ENCODE measurements at regions of chr20 and their contacts with region 1.

Region 1: GRCh38 chr20:56400090-56400542 is 7.7 kb downstream of the CSTF1 start:
- DNase-seq: peak in 2 of 5 donors; percentile 56 to 58
- ATAC-seq: peak in 2 of 4 donors; percentile 44 to 69
- H3K4me3 ChIP-seq: no peak overlapping the region
- H3K27ac ChIP-seq: no peak overlapping the region
- H3K4me1 ChIP-seq: peaks cover 0 to 12% (median 5%) of the 10 kb centered on the region in 12 donors
- H3K27me3 ChIP-seq: no peaks in the 10 kb centered on the region
- CTCF ChIP-seq: peak; percentile 71 to 91 (median 85)
- POLR2A ChIP-seq: no peak

Region 2: GRCh38 chr20:56460459-56460858 is 60.3 kb after region 1 on chr20:
- intact Hi-C with region 1: loop called in 4 of 10 experiments (anchors 5 kb)
- DNase-seq: no peak
- ATAC-seq: no peak
- H3K4me3 ChIP-seq: no peak overlapping the region
- H3K27ac ChIP-seq: peak overlapping the region in 1 of 12 donors; percentile 15
- H3K4me1 ChIP-seq: peaks cover 0 to 25% (median 0%) of the 10 kb centered on the region in 12 donors
- H3K27me3 ChIP-seq: no peaks in the 10 kb centered on the region
- CTCF ChIP-seq: no peak
- POLR2A ChIP-seq: no peak

Region 3: DNA sequence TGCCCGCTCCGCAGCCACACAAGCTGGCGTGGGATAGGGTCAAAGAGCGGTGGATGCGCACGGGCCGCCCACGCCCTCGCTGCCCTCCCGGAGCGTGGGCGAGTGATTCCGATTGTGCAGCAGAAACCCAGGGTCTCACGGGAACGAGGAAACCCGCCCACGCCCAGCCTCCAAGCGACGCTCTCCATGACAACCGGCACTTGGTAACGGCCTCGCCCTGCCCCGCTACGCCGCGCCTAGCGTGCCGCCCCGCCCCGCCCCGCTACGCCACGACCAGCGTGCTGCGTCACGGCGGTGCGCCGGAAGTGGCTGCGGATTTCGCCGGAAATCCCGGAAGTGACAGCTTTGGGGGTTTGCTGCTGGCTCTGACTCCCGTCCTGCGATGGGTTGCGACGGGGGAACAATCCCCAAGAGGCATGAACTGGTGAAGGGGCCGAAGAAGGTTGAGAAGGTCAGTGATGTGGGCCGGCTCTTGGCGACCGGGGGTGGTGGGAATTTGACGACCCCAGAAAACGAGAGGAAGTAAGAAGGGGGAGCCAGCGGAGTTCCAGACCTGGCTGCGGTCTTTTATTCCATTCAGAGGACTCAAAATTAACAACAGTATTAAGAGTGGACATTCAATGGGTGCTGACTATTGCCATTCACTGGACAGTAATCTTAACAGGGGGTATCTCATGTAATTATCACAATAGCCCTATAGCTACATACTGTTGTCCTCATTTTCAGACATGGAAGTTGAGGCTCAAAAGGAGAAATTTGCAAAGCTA is 68.4 kb after region 1 on chr20 and contains the start of gene RTF2:
- intact Hi-C with region 1: loop called in 5 of 10 experiments (anchors 1 to 5 kb)
- DNase-seq: peak; percentile 94 to 97 (median 96)
- ATAC-seq: peak; percentile 97 to 100 (median 100)
- H3K4me3 ChIP-seq: peak within 1 kb of the TSS; percentile 46 to 94 (median 84)
- H3K27ac ChIP-seq: peak within 1 kb of the TSS; percentile 38 to 91 (median 82)
- H3K4me1 ChIP-seq: peaks cover 0 to 48% (median 21%) of the 10 kb centered on the region in 12 donors
- H3K27me3 ChIP-seq: no peaks in the 10 kb centered on the region
- CTCF ChIP-seq: no peak
- POLR2A ChIP-seq: peak in 1 of 2 donors; percentile 50
- total RNA-seq, gene RTF2: 61.9 to 101 (median 86.2) TPM